Mammary epithelial cell (primary cell): ENCODE measurements at regions of chr2 and their contacts with region 1.

Region 1: GRCh38 chr2:61368687-61369665 is 101.9 kb downstream of the USP34 start:
- DNase-seq: no peak
- H3K4me3 ChIP-seq: no peak overlapping the region
- H3K27ac ChIP-seq: no peak overlapping the region
- H3K4me1 ChIP-seq: no peaks in the 10 kb centered on the region
- H3K27me3 ChIP-seq: no peaks in the 10 kb centered on the region
- CTCF ChIP-seq: no peak

Region 2: GRCh38 chr2:61328707-61329251 is 40.2 kb before region 1 on chr2:
- CTCF ChIA-PET with region 1: no interaction called
- dilution Hi-C with region 1: loop called (anchors 5 kb)
- in situ Hi-C with region 1: no loop called
- intact Hi-C with region 1: no loop called
- DNase-seq: peak; percentile 62
- H3K4me3 ChIP-seq: no peak overlapping the region
- H3K27ac ChIP-seq: no peak overlapping the region
- H3K4me1 ChIP-seq: no peaks in the 10 kb centered on the region
- H3K27me3 ChIP-seq: no peaks in the 10 kb centered on the region
- CTCF ChIP-seq: no peak

Region 3: DNA sequence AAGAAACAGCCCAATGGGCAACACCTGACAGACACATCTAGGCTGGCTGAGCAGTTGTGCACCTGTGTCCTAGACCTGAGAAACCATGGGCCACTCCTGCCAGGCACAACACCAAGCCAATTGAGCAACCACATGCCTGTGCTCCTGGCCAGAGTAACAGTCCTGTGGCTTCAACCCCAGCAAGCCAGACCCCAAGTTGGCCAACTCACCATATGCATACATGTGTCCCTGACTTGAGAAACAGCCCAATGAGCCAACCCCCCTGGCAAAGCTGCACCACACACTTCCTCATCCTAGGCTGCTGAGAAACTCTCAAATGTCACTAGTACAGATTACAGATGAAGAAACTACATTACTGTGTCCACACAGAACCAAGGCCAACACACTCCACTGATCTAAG is 65.3 kb after region 1 on chr2:
- CTCF ChIA-PET with region 1: no interaction called
- dilution Hi-C with region 1: no loop called
- in situ Hi-C with region 1: no loop called
- intact Hi-C with region 1: loop called (anchors 10 kb)
- DNase-seq: no peak
- H3K4me3 ChIP-seq: no peak overlapping the region
- H3K27ac ChIP-seq: no peak overlapping the region
- H3K4me1 ChIP-seq: no peaks in the 10 kb centered on the region
- H3K27me3 ChIP-seq: no peaks in the 10 kb centered on the region
- CTCF ChIP-seq: no peak

Region 4: GRCh38 chr2:63058921-63059792 is 1690.2 kb after region 1 on chr2:
- CTCF ChIA-PET with region 1: no interaction called
- dilution Hi-C with region 1: no loop called
- in situ Hi-C with region 1: no loop called
- intact Hi-C with region 1: no loop called
- DNase-seq: no peak
- H3K4me3 ChIP-seq: peak overlapping the region in 1 of 3 experiments; percentile 4
- H3K27ac ChIP-seq: no peak overlapping the region
- H3K4me1 ChIP-seq: no peaks in the 10 kb centered on the region
- H3K27me3 ChIP-seq: peaks cover 14% of the 10 kb centered on the region
- CTCF ChIP-seq: no peak